ENCODE measurements at regions of chr10 and their contacts with region 1.

Region 1: DNA sequence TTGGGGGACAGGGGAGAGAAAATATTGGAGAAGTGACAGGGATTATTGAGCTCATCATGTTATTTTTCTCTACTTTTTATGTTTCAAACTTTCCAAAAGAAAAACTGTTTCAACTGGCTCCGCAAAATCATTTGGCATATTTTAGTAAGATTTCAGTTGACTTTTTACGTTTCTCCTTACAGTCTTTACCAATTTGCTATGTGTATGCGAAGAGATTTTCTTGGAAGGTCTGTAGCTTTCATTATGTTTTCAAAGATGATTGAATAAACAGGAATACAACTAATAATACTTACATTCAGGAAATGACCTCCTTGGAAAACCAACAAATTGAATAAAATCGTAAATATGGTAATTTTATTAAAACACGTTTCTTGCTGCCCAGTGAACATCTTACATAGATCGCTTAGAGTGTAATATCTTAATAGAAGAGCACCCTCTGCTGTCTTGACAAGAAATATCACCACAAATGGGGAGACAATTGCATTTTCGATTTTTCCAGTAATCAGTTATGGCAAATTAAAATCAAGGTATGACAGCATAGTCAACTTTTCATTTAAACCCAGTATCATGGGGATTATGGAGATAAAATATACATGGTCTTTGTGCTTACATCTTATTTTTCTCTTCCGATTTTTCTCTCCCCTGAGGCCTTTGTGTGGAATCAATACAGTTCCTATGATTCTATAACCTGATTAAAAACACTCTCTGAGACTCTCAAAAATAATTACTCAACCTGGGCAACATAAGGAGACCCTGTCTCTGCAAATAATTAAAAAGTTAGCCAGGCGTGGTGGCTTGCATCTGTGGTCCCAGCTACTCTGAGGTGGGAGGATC is 43.1 kb downstream of the MBL2 start:
- DNase-seq: no peak
- ATAC-seq: no peak
- H3K4me3 ChIP-seq: no peak overlapping the region
- H3K4me3 Mint-ChIP-seq: no peak overlapping the region
- H3K27ac ChIP-seq: no peak overlapping the region
- H3K27ac Mint-ChIP-seq: no peak overlapping the region
- H3K4me1 ChIP-seq: no peaks in the 10 kb centered on the region
- H3K4me1 Mint-ChIP-seq: no peaks in the 10 kb centered on the region
- H3K27me3 ChIP-seq: no peaks in the 10 kb centered on the region
- H3K27me3 Mint-ChIP-seq: no peaks in the 10 kb centered on the region
- CTCF ChIP-seq: no peak

Region 2: GRCh38 chr10:51001587-51001986 is 1727.9 kb before region 1 on chr10:
- CTCF ChIA-PET with region 1: no interaction called
- POLR2A ChIA-PET with region 1: no interaction called
- intact Hi-C with region 1: loop called in 1 of 2 experiments (anchors 5 kb)
- DNase-seq: peak in 3 of 14 experiments; percentile 1 to 20 (median 11)
- ATAC-seq: no peak
- H3K4me3 ChIP-seq: no peak overlapping the region
- H3K4me3 Mint-ChIP-seq: no peak overlapping the region
- H3K27ac ChIP-seq: no peak overlapping the region
- H3K27ac Mint-ChIP-seq: no peak overlapping the region
- H3K4me1 ChIP-seq: no peaks in the 10 kb centered on the region
- H3K4me1 Mint-ChIP-seq: no peaks in the 10 kb centered on the region
- H3K27me3 ChIP-seq: peaks cover 0 to 6% of the 10 kb centered on the region in 2 experiments
- H3K27me3 Mint-ChIP-seq: peaks cover 20% of the 10 kb centered on the region
- CTCF ChIP-seq: peak; percentile 73

Measured in CD4-positive, alpha-beta T cell (primary cell).